Activated T-helper 1 cell treated with anti-CD3 and anti-CD28 coated beads, Interleukin-12 subunit alpha, Interleukin-12 subunit beta, Interleukin-2, Interleukin-4 antibody, amounts not matched to agents 30 ng/mL and 10 ng/mL and 1 ng/mL, durations not matched to agents 14 hours and 24 hours and 36 hours (primary cell): ENCODE measurements at regions of chr7 and their contacts with region 1.

Region 1: DNA sequence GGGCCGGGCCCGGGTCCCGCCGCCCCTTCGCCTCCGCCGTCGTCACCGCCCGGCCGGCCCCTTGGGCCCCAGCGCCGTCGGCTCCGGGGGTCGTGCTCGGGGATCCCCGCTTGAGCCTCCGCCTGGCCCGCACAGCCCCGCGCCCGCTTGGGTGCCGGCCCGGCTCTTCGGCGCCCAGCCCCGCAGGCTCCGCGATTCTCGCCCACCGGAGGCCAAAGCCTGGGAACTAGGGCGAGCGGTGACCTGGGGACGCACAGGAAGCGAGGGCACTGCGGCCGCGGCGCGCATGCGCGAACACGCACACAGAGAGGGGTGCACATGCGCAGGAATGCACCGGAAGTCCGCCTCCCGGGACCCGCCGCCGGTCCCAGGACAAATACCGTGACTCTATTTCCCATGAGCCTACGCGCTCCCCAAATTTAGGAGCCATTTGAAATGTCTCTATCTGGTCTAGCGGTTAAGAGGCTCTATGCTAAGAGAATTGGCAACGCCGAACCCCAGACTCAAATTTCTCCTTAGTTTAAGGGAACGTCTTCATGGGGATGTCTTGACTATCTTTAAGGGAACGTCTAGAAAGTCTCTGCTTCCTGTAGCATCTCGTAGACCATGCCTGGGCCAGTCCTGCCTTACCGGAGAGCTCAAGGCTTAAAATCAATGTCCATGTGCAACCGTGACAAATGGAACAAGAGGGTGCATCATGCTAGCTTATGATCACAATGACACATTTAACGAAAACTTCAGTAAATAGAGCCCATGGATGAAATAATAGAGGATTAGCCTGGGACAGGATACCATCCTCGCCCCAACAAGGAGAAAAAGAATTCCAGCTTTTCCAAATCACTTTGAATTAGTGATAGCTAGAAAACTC is at the start of gene ZNF12:
- DNase-seq: peak; percentile 93
- H3K4me3 Mint-ChIP-seq: peak within 1 kb of the TSS; percentile 95
- H3K27ac Mint-ChIP-seq: peak within 1 kb of the TSS; percentile 90
- H3K4me1 Mint-ChIP-seq: peaks cover 31% of the 10 kb centered on the region
- H3K27me3 Mint-ChIP-seq: peaks cover 2% of the 10 kb centered on the region
- total RNA-seq, gene ZNF12: 19.7 and 20.9 TPM in 2 replicates

Region 2: GRCh38 chr7:4830176-4830575 is 1876.7 kb before region 1 on chr7:
- intact Hi-C with region 1: no loop called
- DNase-seq: peak; percentile 30
- H3K4me3 Mint-ChIP-seq: no peak overlapping the region
- H3K27ac Mint-ChIP-seq: no peak overlapping the region
- H3K4me1 Mint-ChIP-seq: no peaks in the 10 kb centered on the region
- H3K27me3 Mint-ChIP-seq: peaks cover 5% of the 10 kb centered on the region

Region 3: GRCh38 chr7:6460303-6460702 is 246.6 kb before region 1 on chr7:
- intact Hi-C with region 1: no loop called
- DNase-seq: no peak
- H3K4me3 Mint-ChIP-seq: no peak overlapping the region
- H3K27ac Mint-ChIP-seq: no peak overlapping the region
- H3K4me1 Mint-ChIP-seq: no peaks in the 10 kb centered on the region
- H3K27me3 Mint-ChIP-seq: no peaks in the 10 kb centered on the region

Region 4: GRCh38 chr7:6589829-6590644 is 116.9 kb before region 1 on chr7 and contains the start of gene INTS15:
- intact Hi-C with region 1: loop called (anchors 2 kb)
- DNase-seq: peak; percentile 78
- H3K4me3 Mint-ChIP-seq: peak within 1 kb of the TSS; percentile 88
- H3K27ac Mint-ChIP-seq: peak within 1 kb of the TSS; percentile 85
- H3K4me1 Mint-ChIP-seq: peaks cover 8% of the 10 kb centered on the region
- H3K27me3 Mint-ChIP-seq: no peaks in the 10 kb centered on the region
- total RNA-seq, gene INTS15: 44.6 and 46.6 TPM in 2 replicates

Region 5: DNA sequence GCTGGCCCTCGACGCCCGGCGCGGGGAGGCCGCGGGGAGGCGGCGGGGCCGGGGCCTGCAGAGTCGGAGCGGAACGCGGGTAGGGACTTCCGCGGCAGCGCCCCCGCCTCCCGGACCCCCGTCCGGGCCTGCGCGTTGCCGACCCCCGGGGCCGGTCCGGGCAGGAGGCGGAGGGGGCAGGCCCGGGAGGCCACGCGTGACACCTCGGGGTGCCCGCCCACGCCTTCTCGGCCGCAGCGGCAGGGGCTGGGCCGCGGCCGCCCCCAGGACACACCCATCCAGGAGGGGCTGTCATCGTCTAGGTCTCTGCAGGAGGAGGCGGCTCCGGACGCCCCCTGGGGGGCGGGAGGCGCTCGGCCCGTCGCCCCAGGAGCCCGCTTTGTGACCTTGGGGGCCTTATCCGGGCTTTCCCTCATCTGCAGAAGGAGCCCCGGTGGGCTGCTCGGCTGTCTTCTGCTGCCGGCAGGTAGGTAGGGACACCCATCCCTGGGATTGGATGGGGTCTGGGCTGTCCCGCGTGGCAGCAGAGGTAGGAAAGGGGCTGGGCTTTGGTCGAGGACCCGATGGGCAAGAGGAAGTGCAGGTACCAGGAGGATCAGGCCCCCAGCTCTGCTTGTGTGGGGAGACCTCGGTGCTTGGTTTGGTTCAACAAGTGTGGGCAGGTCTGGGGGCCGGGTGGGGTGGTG is 69.2 kb before region 1 on chr7:
- intact Hi-C with region 1: loop called (anchors 1 kb)
- DNase-seq: peak; percentile 48
- H3K4me3 Mint-ChIP-seq: peak overlapping the region; percentile 84
- H3K27ac Mint-ChIP-seq: peak overlapping the region; percentile 87
- H3K4me1 Mint-ChIP-seq: peaks cover 19% of the 10 kb centered on the region
- H3K27me3 Mint-ChIP-seq: no peaks in the 10 kb centered on the region

Region 6: DNA sequence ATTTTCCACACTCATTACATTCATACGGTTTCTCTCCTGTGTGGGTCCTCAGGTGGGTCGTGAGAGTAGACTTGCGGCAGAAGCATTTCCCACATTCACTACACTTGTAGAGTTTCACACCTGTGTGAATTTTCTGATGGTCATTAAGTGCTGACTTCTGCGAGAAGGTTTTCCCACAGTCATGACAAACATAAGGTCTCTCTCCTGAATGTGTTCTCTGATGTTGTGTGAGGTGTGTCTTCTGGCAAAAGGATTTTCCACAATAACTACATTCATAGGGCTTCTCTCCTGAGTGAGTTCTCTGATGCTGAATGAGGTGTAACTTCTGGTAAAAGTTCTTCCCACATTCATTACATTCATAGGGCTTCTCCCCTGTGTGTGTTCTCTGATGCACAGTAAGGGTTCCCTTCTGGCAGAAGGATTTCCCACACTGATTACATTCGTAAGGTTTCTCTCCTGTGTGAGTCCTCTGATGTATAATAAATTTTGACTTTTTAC is 15.3 kb before region 1 on chr7:
- intact Hi-C with region 1: loop called (anchors 1 kb)
- DNase-seq: no peak
- H3K4me3 Mint-ChIP-seq: no peak overlapping the region
- H3K27ac Mint-ChIP-seq: no peak overlapping the region
- H3K4me1 Mint-ChIP-seq: no peaks in the 10 kb centered on the region
- H3K27me3 Mint-ChIP-seq: no peaks in the 10 kb centered on the region

Region 7: GRCh38 chr7:6729492-6730342 is 22.8 kb after region 1 on chr7:
- intact Hi-C with region 1: loop called (anchors 1 kb)
- DNase-seq: peak; percentile 81
- H3K4me3 Mint-ChIP-seq: peak overlapping the region; percentile 93
- H3K27ac Mint-ChIP-seq: peak overlapping the region; percentile 80
- H3K4me1 Mint-ChIP-seq: peaks cover 27% of the 10 kb centered on the region
- H3K27me3 Mint-ChIP-seq: peaks cover 2% of the 10 kb centered on the region